ENCODE measurements at regions of chr10 and their contacts with region 1.

Region 1: GRCh38 chr10:102641880-102642735 is 2.2 kb upstream of the TRIM8 start:
- DNase-seq: peak; percentile 94
- H3K4me3 Mint-ChIP-seq: peak overlapping the region; percentile 90
- H3K27ac Mint-ChIP-seq: peak overlapping the region; percentile 82
- H3K4me1 Mint-ChIP-seq: peaks cover 19% of the 10 kb centered on the region
- H3K27me3 Mint-ChIP-seq: no peaks in the 10 kb centered on the region

Region 2: GRCh38 chr10:101818119-101818871 is 823.8 kb before region 1 on chr10 and contains the start of gene OGA:
- intact Hi-C with region 1: loop called (anchors 2 kb)
- DNase-seq: peak; percentile 97
- H3K4me3 Mint-ChIP-seq: peak within 1 kb of the TSS; percentile 100
- H3K27ac Mint-ChIP-seq: peak within 1 kb of the TSS; percentile 100
- H3K4me1 Mint-ChIP-seq: peaks cover 57% of the 10 kb centered on the region
- H3K27me3 Mint-ChIP-seq: peaks cover 3% of the 10 kb centered on the region
- total RNA-seq, gene OGA: 113 and 117 TPM in 2 replicates

Region 3: GRCh38 chr10:102151774-102152544 is 490.1 kb before region 1 on chr10 and contains the start of gene NOLC1:
- intact Hi-C with region 1: loop called (anchors 1 kb)
- DNase-seq: peak; percentile 100
- H3K4me3 Mint-ChIP-seq: peak within 1 kb of the TSS; percentile 98
- H3K27ac Mint-ChIP-seq: peak within 1 kb of the TSS; percentile 98
- H3K4me1 Mint-ChIP-seq: peaks cover 28% of the 10 kb centered on the region
- H3K27me3 Mint-ChIP-seq: no peaks in the 10 kb centered on the region
- total RNA-seq, gene NOLC1: 260 and 271 TPM in 2 replicates

Region 4: DNA sequence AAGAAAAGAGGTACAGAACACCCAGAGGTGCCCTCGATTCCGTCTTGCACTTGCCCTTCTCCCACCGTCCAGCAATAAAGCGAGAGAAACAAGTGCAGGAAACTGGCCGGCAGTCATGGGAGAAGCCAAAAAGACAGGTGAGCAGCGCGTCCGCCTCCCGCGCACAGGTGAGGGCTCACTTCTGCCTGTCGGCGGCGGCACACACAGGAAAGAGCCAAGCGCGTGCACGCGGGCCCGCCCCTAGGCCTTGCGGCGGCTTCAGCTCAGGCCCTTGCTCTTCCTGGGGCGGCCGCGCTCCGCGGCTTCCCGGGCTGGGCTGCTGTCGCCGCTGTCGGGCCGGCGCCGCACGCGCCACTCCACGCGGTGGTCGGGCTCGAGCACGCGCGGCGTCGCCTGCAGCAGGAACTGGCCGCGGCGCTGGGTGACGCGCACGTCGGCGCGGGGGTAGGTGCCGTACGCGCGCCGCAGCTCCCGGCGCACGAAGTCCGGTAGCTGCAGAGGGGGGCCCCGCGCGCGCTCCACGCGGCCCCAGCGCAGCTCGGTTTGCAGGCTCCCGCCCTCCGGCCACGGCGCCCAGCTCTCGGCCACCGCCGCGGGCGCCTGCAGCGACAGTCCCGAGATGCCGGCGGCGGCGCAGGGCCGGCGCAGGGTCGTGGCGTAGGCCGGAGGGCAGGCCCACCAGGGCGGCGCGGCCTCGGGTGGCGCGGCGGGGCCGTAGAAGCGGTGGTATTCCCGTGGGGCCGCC is 191.7 kb before region 1 on chr10:
- intact Hi-C with region 1: loop called (anchors 2 kb)
- DNase-seq: peak; percentile 88
- H3K4me3 Mint-ChIP-seq: peak overlapping the region; percentile 95
- H3K27ac Mint-ChIP-seq: peak overlapping the region; percentile 90
- H3K4me1 Mint-ChIP-seq: peaks cover 33% of the 10 kb centered on the region
- H3K27me3 Mint-ChIP-seq: no peaks in the 10 kb centered on the region

Region 5: DNA sequence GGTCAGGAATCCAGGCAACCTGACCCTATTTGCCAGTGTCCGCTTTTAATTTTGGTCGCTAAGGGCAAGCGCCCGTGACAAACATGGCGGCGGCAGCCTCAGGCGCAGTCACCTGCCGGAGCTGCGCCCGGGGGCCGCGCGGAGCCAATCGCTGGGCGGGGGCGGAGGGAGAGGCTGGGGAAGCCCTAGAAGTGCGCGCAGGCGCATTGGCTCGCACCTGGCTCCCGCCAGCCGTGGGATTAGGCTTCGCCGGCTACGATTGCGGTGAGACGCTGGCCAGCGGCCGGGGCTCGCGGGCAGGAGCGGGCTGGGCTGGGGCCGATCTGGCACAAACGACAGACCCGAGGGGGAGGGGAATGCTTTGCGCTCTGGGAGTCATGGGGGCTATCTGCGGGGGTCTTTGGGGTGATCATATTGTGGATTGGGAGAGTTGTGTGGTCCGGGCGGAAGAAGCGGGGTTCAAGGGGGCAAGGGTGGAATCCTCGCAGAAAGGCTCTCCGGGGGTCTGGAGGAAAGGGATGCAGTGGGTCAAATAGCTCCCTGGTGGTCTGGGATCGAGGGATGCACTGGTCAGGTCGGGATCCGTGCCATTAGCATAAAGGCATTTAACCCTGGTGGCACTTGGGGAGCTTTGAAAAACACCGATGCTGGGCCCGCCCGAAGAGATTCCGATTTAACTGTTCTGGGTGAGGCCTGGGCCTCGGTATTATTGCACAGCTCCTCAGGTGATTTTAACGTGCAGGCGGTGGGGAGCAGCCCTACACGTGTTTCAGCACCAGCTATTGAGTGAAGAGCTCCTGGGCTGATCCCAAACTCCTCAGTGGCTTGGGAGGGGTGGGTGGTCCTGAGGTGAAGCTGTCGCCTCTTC is 180.7 kb before region 1 on chr10:
- intact Hi-C with region 1: no loop called
- DNase-seq: peak; percentile 91
- H3K4me3 Mint-ChIP-seq: peak overlapping the region; percentile 94
- H3K27ac Mint-ChIP-seq: peak overlapping the region; percentile 87
- H3K4me1 Mint-ChIP-seq: peaks cover 26% of the 10 kb centered on the region
- H3K27me3 Mint-ChIP-seq: peaks cover 1% of the 10 kb centered on the region

Region 6: GRCh38 chr10:102673819-102674511 is 31.9 kb after region 1 on chr10:
- intact Hi-C with region 1: loop called (anchors 1 kb)
- DNase-seq: peak; percentile 69
- H3K4me3 Mint-ChIP-seq: peak overlapping the region; percentile 71
- H3K27ac Mint-ChIP-seq: peak overlapping the region; percentile 69
- H3K4me1 Mint-ChIP-seq: peaks cover 25% of the 10 kb centered on the region
- H3K27me3 Mint-ChIP-seq: no peaks in the 10 kb centered on the region

Region 7: GRCh38 chr10:102691285-102692066 is 49.4 kb after region 1 on chr10:
- intact Hi-C with region 1: no loop called
- DNase-seq: no peak
- H3K4me3 Mint-ChIP-seq: no peak overlapping the region
- H3K27ac Mint-ChIP-seq: no peak overlapping the region
- H3K4me1 Mint-ChIP-seq: no peaks in the 10 kb centered on the region
- H3K27me3 Mint-ChIP-seq: no peaks in the 10 kb centered on the region

Region 8: DNA sequence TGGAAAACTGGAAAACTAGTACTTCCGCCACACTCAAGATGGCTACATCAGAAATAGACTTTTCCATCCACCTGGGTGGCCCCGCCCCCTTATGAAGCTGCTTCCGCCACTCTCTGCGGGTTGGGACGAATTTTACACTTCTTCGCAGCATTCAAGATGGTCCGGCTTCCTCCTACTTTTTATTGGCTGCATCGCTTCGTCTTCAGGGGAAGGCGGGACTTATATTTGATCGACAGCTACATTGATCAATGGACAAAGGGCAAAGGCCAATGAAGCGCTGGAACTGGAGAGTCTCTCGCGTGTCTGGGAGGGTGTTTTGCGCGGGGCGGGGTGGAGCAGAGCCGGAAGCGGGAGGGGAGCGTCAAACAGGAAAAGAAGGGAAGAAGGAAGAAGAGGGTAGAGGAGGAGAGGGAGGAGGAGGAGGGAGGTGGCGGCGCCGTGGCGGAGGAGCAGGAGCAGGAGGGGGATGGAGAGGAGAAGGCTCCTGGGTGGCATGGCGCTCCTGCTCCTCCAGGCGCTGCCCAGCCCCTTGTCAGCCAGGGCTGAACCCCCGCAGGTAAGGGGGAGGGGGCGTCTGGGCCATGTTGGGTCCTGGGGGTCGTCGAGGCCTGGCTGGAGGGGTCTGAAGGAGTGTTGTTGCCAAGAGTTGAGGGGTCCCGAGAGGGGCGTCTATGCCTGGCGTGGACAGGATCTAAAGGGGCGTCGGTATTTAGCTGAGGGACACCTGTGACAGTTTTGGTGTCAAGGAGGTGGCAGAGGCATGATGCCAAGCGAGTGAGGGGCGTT is 101.7 kb after region 1 on chr10 and contains the start of gene WBP1L:
- intact Hi-C with region 1: loop called (anchors 1 kb)
- DNase-seq: peak; percentile 94
- H3K4me3 Mint-ChIP-seq: peak within 1 kb of the TSS; percentile 92
- H3K27ac Mint-ChIP-seq: peak within 1 kb of the TSS; percentile 93
- H3K4me1 Mint-ChIP-seq: peaks cover 46% of the 10 kb centered on the region
- H3K27me3 Mint-ChIP-seq: peaks cover 1% of the 10 kb centered on the region
- total RNA-seq, gene WBP1L: 19.4 and 20.0 TPM in 2 replicates

Region 9: DNA sequence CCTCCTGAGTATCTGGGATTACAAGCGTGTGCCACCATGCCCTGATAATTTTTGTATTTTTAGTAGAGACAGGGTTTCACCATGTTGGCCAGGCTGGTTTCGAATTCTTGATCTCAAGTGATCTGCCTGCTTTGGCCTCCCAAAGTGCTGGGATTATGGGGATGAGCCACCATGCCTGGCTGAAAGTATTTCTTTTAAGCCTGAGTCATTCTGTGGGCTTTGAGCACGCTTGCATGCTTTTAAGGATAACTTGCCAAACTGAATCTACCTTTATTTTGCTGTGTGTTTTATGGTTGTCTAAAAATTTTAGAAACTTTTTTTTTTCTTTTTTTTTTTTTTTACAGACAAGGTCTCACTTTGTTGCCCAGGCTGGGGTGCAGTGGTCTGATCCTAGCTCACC is 309.2 kb after region 1 on chr10:
- intact Hi-C with region 1: no loop called
- DNase-seq: no peak
- H3K4me3 Mint-ChIP-seq: no peak overlapping the region
- H3K27ac Mint-ChIP-seq: no peak overlapping the region
- H3K4me1 Mint-ChIP-seq: no peaks in the 10 kb centered on the region
- H3K27me3 Mint-ChIP-seq: no peaks in the 10 kb centered on the region

Region 10: DNA sequence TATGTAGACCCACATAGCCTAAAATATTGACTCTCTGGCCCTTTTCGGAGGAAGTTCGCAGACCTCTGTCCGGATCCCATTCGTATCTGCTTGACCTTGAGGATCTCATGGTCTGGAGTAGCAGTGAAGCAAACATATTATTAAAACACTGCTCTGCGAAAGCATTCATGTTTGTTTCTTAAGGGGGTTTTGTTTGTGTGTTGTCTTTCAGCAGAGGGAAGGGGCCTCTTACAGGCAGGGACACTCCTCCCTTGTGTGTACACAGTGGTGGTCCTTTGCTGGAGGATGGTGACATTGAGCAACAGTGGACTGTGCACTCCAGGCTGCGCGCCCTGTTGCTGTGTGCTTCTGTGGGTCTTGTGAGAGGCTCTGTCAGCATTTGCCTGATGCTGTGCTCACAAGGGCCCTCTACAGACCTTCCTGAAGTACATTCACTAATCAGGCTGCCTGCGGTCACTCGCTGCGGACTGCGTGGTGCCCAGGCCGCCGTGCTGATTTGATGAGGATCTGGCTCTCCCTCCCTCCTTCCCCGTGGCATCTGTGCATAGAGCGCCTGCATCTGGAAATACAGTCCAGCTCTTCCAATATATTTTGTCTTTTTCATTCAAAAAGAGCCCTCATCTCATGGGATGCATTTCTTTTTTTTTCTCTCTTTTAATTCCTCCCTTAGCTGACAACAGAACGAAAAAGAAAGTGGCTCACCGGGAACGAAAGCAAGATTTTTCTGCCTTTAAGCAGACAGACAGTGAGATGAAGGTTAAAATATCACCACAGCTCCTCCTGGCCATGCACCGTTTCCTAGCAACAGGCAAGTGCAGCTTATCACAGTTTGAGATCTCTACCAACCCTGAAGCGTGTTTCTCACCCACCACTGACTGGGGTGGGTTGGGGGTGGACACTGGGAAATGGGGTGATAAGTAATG is 411.8 kb after region 1 on chr10:
- intact Hi-C with region 1: no loop called
- DNase-seq: peak; percentile 69
- H3K4me3 Mint-ChIP-seq: peak overlapping the region; percentile 83
- H3K27ac Mint-ChIP-seq: peak overlapping the region; percentile 92
- H3K4me1 Mint-ChIP-seq: peaks cover 25% of the 10 kb centered on the region
- H3K27me3 Mint-ChIP-seq: no peaks in the 10 kb centered on the region

Region 11: GRCh38 chr10:103192451-103193106 is 550.5 kb after region 1 on chr10:
- intact Hi-C with region 1: loop called (anchors 5 kb)
- DNase-seq: peak; percentile 64
- H3K4me3 Mint-ChIP-seq: peak overlapping the region; percentile 96
- H3K27ac Mint-ChIP-seq: peak overlapping the region; percentile 99
- H3K4me1 Mint-ChIP-seq: peaks cover 45% of the 10 kb centered on the region
- H3K27me3 Mint-ChIP-seq: no peaks in the 10 kb centered on the region

Measured in activated T-helper 1 cell treated with anti-CD3 and anti-CD28 coated beads, Interleukin-12 subunit alpha, Interleukin-12 subunit beta, Interleukin-2, Interleukin-4 antibody, amounts not matched to agents 30 ng/mL and 10 ng/mL and 1 ng/mL, durations not matched to agents 14 hours and 24 hours and 36 hours (primary cell).